ENCODE measurements at regions of chr18 and their contacts with region 1.

Region 1: GRCh38 chr18:50356036-50356945 is 18.6 kb upstream of the SKA1 start:
- DNase-seq: peak; percentile 34
- CTCF ChIP-seq: peak; percentile 30

Region 2: GRCh38 chr18:50057009-50057408 is 299.3 kb before region 1 on chr18:
- CTCF ChIA-PET with region 1: interaction called, 10 read pairs
- POLR2A ChIA-PET with region 1: no interaction called
- DNase-seq: no peak
- CTCF ChIP-seq: no peak

Region 3: DNA sequence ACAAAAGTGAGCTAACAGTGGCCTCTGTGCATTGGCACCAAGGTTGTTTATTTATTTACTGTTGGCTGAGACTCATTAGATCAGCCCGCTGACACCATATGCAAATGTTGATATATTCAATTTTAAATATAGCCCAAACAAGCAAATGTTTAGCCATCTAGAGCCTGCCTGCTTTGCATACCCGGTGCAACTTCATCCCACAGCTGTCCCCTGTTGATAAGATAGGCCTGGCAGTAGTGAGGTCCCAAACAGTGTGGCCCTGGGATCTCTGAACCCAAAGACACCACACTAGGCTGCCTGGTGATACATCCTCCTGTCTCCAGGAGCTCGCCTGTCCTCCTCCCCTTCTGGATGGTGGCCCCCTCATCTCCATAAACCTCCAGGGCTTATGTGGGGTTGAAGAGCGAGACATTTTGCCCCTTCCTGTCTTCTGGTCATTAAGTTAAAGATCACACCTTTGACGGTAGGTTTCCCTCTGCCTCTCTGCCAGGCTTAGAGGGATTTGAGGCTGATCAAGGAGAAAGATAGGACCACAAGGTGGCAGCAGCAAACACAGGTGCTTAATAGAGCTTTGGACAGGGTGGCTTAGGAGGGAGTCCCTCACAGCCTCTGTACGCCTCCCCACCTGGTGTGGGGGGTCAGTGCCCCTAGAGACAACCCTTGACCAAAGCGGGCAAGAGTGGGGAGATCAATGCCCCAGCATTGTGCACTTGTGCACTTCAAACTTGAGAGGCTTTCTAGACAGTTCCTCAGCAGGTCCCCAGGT is 137.7 kb before region 1 on chr18:
- CTCF ChIA-PET with region 1: interaction called, 134 read pairs
- POLR2A ChIA-PET with region 1: no interaction called
- DNase-seq: peak; percentile 59
- CTCF ChIP-seq: peak; percentile 39

Region 4: GRCh38 chr18:50273203-50274043 is 82.9 kb before region 1 on chr18:
- CTCF ChIA-PET with region 1: interaction called, 91 read pairs
- POLR2A ChIA-PET with region 1: no interaction called
- DNase-seq: no peak
- CTCF ChIP-seq: no peak

Region 5: GRCh38 chr18:50307738-50308470 is 48.4 kb before region 1 on chr18:
- CTCF ChIA-PET with region 1: interaction called, 17 read pairs
- POLR2A ChIA-PET with region 1: no interaction called
- DNase-seq: peak; percentile 93
- CTCF ChIP-seq: no peak

Region 6: GRCh38 chr18:50334546-50335152 is 21.6 kb before region 1 on chr18:
- CTCF ChIA-PET with region 1: interaction called, 41 read pairs
- POLR2A ChIA-PET with region 1: no interaction called
- DNase-seq: no peak
- CTCF ChIP-seq: no peak

Region 7: DNA sequence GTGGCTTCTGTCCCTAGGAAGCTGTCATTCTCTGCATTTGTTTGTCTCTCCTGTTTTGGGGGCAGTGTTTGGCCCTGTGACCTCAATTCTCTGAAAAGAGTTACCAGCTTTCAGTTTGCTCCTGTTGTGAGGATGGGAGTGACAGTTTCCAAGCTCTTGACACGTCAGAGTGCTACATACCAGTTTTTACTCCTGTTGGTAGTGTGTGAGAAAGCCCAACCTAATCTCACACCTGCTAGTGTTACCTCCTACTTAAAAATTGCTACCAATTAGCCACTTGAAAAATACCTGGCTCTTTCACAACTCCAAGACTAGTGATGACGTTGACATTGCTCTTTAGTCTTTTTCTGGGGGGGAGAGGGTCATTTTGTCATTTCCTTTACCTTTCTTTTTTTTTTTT is 32.7 kb after region 1 on chr18:
- CTCF ChIA-PET with region 1: interaction called, 12 read pairs
- POLR2A ChIA-PET with region 1: no interaction called
- DNase-seq: no peak
- CTCF ChIP-seq: no peak

Region 8: DNA sequence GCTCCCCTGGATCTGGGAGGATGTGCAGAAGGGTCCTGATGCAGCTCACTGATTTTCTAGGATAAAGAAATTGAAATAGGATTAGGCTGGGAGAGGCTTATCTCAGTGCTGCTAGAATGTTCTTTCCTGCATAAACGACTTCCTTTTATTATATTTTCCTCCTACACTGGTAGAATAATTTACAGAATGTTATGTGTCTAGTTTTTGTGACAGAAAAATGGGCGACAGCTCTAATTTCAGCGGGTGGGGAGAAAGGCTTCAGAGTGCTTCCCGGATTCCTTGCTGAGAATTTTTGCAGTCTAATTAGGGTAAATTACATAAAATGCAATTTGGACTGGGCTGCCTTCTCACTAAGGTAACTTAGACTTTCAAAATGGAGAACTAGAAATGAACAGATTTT is 84.7 kb after region 1 on chr18:
- CTCF ChIA-PET with region 1: no interaction called
- POLR2A ChIA-PET with region 1: no interaction called
- DNase-seq: no peak
- CTCF ChIP-seq: no peak

Region 9: GRCh38 chr18:50665519-50665918 is 309.2 kb after region 1 on chr18:
- CTCF ChIA-PET with region 1: no interaction called
- POLR2A ChIA-PET with region 1: no interaction called
- DNase-seq: no peak
- CTCF ChIP-seq: no peak

Measured in GM10248 (cell line).